ENCODE measurements at regions of chr2 and their contacts with region 1.

Region 1: GRCh38 chr2:71505086-71505769 is 51.9 kb downstream of the DYSF start:
- DNase-seq: no peak
- H3K4me3 ChIP-seq: no peak overlapping the region
- H3K4me1 ChIP-seq: no peaks in the 10 kb centered on the region
- H3K27me3 ChIP-seq: no peaks in the 10 kb centered on the region

Region 2: GRCh38 chr2:71154798-71155197 is 350.4 kb before region 1 on chr2:
- in situ Hi-C with region 1: loop called (anchors 5 kb)
- DNase-seq: no peak
- H3K4me3 ChIP-seq: no peak overlapping the region
- H3K4me1 ChIP-seq: peaks cover 7% of the 10 kb centered on the region; the same call in 1 of the 2 replicates
- H3K27me3 ChIP-seq: peaks cover 2% of the 10 kb centered on the region; the same call in 1 of the 2 replicates

Region 3: GRCh38 chr2:71303849-71304248 is 201.4 kb before region 1 on chr2:
- in situ Hi-C with region 1: loop called (anchors 5 kb)
- DNase-seq: no peak
- H3K4me3 ChIP-seq: no peak overlapping the region
- H3K4me1 ChIP-seq: no peaks in the 10 kb centered on the region
- H3K27me3 ChIP-seq: no peaks in the 10 kb centered on the region

Measured in HAP-1 (cell line).